ENCODE measurements at regions of chr11 and their contacts with region 1.

Region 1: GRCh38 chr11:120108154-120108865 is 29.6 kb downstream of the TRIM29 start:
- DNase-seq: peak; percentile 46 to 94
- H3K4me3 ChIP-seq: no peak overlapping the region
- H3K27ac ChIP-seq: no peak overlapping the region
- H3K4me1 ChIP-seq: peaks cover 2 to 12% (median 7%) of the 10 kb centered on the region in 4 experiments
- H3K27me3 ChIP-seq: peaks cover 0 to 2% (median 1%) of the 10 kb centered on the region in 4 experiments; a peak in 2 of 7 replicates
- CTCF ChIP-seq: peak; percentile 98 to 99 (median 98)
- EP300 ChIP-seq: no peak
- POLR2A ChIP-seq: no peak
- RAD21 ChIP-seq: peak; percentile 100

Region 2: DNA sequence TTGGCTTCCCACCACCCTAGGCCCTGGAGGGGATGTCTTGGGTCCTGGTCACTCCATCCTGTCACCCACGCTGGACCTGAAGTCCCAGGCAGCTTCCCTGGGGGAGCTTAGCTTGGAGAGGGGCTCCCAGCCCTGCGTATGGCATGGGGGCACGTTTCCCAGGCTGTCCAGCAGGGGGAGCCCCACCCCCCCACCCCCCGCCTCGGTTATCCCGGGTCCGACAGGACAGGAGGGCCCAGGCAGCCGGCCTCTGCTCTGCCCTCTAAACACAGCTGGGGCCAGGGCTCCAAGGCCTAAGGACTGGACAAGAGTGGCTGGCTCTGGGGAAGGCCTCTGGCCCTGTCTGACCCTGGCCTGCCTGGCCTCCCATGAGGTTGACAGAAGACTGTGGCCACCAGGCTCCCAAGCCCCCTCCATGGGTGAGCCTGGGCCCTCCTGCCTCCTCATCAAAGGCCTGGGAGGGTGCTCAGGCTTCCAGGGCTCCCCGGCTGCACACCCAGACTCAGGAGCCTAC is 484.2 kb before region 1 on chr11:
- CTCF ChIA-PET with region 1: interaction called, 10 read pairs
- POLR2A ChIA-PET with region 1: no interaction called
- DNase-seq: no peak
- H3K4me3 ChIP-seq: no peak overlapping the region
- H3K27ac ChIP-seq: no peak overlapping the region
- H3K4me1 ChIP-seq: peaks cover 5 to 30% (median 17%) of the 10 kb centered on the region in 4 experiments
- H3K27me3 ChIP-seq: no peaks in the 10 kb centered on the region; a peak in 2 of 7 replicates
- CTCF ChIP-seq: peak; percentile 50 to 77 (median 56); a peak in 3 of 4 replicates
- EP300 ChIP-seq: no peak
- POLR2A ChIP-seq: no peak
- RAD21 ChIP-seq: peak in 1 of 2 experiments; percentile 52; a peak in 2 of 4 replicates

Region 3: DNA sequence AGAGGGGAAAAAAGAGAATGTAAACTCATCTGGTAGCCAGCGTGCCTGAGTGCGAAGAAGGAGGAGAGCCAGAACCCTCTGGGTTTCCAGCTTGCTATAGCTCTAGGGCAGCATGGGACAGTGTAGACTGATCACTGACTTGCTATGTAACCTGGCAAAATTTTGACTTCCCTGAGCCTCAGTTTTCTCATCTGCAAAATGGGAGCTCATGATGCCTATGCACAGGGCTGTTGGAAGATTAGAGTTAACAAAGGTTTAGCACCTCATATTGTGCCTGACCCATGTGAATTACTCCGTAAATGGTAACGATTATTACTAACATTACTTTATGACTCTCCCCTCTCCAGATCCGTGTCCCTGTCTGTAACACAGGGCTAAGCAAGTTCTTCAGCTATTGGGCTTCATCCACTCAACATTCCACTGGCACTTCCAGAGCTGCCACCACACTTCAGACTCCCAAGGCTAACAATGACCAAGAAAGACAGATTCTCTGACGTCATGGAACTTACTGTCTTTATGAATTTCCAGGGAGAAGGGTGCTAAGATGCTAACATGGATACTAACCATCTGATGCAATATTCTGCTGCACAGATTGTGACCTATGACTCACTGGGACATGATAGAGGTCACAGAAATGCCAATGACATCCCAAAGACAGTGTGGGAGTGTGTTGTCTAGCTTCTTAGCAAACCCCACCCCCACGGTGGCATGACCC is 165.6 kb before region 1 on chr11:
- CTCF ChIA-PET with region 1: interaction called, 11 read pairs
- POLR2A ChIA-PET with region 1: no interaction called
- DNase-seq: no peak
- H3K4me3 ChIP-seq: no peak overlapping the region
- H3K27ac ChIP-seq: no peak overlapping the region
- H3K4me1 ChIP-seq: peaks cover 2 to 6% (median 3%) of the 10 kb centered on the region in 4 experiments; a peak in 4 of 7 replicates
- H3K27me3 ChIP-seq: no peaks in the 10 kb centered on the region; a peak in 1 of 7 replicates
- CTCF ChIP-seq: no peak
- EP300 ChIP-seq: no peak
- POLR2A ChIP-seq: no peak
- RAD21 ChIP-seq: no peak

Region 4: DNA sequence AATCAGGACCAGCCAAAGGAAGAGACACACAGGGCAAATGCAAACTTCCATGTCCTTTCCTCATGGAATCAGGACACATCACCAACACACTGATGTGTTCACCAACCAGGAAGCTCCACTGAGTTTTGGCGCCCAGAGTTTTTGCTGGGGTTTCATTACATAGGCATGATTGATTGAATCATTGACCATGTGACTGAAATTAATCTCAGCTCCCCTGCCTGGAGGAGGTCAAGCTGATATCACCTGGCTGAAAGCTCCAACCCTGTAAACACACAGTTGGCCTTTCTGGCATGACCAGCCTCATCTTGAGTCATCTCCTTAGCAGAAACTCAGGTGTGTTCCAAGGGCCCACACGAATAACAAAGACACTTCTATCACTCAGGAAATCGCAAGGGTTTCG is 103.6 kb before region 1 on chr11:
- CTCF ChIA-PET with region 1: interaction called, 146 read pairs
- POLR2A ChIA-PET with region 1: no interaction called
- DNase-seq: no peak
- H3K4me3 ChIP-seq: no peak overlapping the region
- H3K27ac ChIP-seq: no peak overlapping the region
- H3K4me1 ChIP-seq: peaks cover 0 to 15% (median 7%) of the 10 kb centered on the region in 4 experiments; a peak in 4 of 7 replicates
- H3K27me3 ChIP-seq: no peaks in the 10 kb centered on the region
- CTCF ChIP-seq: no peak
- EP300 ChIP-seq: no peak
- POLR2A ChIP-seq: no peak
- RAD21 ChIP-seq: no peak

Region 5: GRCh38 chr11:120096369-120097191 is 11.7 kb before region 1 on chr11:
- CTCF ChIA-PET with region 1: interaction called, 45 read pairs
- POLR2A ChIA-PET with region 1: no interaction called
- DNase-seq: no peak
- H3K4me3 ChIP-seq: peak overlapping the region in 2 of 4 experiments; percentile 10 to 26; a peak in 2 of 8 replicates
- H3K27ac ChIP-seq: no peak overlapping the region
- H3K4me1 ChIP-seq: peaks cover 0 to 12% (median 7%) of the 10 kb centered on the region in 4 experiments; a peak in 4 of 7 replicates
- H3K27me3 ChIP-seq: peaks cover 0 to 34% (median 20%) of the 10 kb centered on the region in 4 experiments; a peak in 5 of 7 replicates
- CTCF ChIP-seq: no peak
- EP300 ChIP-seq: no peak
- POLR2A ChIP-seq: no peak
- RAD21 ChIP-seq: no peak

Region 6: GRCh38 chr11:120172054-120172911 is 64.0 kb after region 1 on chr11:
- CTCF ChIA-PET with region 1: interaction called, 34 read pairs
- POLR2A ChIA-PET with region 1: no interaction called
- DNase-seq: peak; percentile 49 to 79
- H3K4me3 ChIP-seq: no peak overlapping the region
- H3K27ac ChIP-seq: no peak overlapping the region
- H3K4me1 ChIP-seq: peaks cover 0 to 15% (median 3%) of the 10 kb centered on the region in 4 experiments; a peak in 5 of 7 replicates
- H3K27me3 ChIP-seq: peaks cover 21 to 75% (median 47%) of the 10 kb centered on the region in 4 experiments
- CTCF ChIP-seq: peak; percentile 84 to 96 (median 88)
- EP300 ChIP-seq: no peak
- POLR2A ChIP-seq: no peak
- RAD21 ChIP-seq: peak; percentile 99

Region 7: GRCh38 chr11:120205596-120206161 is 97.4 kb after region 1 on chr11:
- CTCF ChIA-PET with region 1: no interaction called
- POLR2A ChIA-PET with region 1: no interaction called
- DNase-seq: no peak
- H3K4me3 ChIP-seq: no peak overlapping the region
- H3K27ac ChIP-seq: no peak overlapping the region
- H3K4me1 ChIP-seq: peaks cover 4 to 7% (median 5%) of the 10 kb centered on the region in 4 experiments
- H3K27me3 ChIP-seq: peaks cover 26 to 63% (median 51%) of the 10 kb centered on the region in 4 experiments
- CTCF ChIP-seq: no peak
- EP300 ChIP-seq: no peak
- POLR2A ChIP-seq: no peak
- RAD21 ChIP-seq: no peak

Measured in H1 (cell line).